Panc1 (cell line): ENCODE measurements at regions of chr4 and their contacts with region 1.

Region 1: DNA sequence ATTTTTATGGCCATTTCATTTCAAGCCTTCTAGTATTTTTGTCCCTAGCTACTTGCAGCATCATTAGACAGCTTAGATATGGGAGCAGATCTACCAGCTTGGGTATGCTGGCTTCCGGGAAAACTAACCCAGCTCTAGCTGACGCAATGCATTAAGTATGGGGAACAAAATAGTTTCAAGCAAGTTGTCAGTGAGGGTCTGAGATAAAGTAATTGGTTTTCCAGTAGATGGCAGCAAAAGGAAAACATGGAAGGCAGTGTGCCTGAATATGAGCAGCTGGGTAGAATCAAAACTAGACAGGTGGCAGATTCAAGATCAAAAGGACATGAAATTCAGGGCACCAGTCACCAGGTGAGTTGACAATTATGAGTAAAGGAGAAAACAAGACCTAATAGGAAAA is 340.9 kb upstream of the CTSO start:
- DNase-seq: no peak
- ATAC-seq: 0 out of 2 replicates have a peak, but pooled peaks have one; percentile 34
- H3K4me3 ChIP-seq: no peak overlapping the region
- H3K27ac ChIP-seq: no peak overlapping the region
- H3K4me1 ChIP-seq: no peaks in the 10 kb centered on the region
- H3K27me3 ChIP-seq: no peaks in the 10 kb centered on the region
- CTCF ChIP-seq: peak; percentile 36

Region 2: DNA sequence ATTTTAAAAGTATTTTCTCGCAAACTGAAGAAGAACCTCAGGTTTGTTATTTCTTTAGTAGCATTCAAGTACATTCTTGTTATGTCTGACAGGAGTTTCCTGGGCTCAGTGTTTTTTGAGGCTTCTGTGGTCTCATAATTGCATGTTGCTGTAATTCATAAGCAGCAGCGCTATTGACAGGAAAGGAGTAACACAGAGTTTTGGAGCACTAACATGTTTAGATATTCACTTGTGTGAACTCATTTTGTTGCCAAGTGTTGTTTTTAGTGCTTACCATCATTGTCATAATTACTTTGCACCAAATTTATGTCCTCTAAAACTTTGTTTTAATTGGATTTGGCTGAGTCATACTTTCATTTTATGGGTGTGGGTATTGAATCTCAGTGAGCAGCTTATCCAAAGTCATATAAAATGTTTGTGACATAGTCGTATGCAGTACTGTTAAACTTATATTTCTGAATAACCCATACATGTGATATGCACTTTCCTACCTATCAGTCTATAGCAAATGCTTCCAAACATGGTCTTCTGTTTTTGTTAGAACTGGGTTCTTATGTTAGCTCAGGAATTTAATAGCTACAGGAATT is 17.8 kb after region 1 on chr4:
- CTCF ChIA-PET with region 1: no interaction called
- POLR2A ChIA-PET with region 1: no interaction called
- in situ Hi-C with region 1: no loop called
- intact Hi-C with region 1: no loop called
- DNase-seq: no peak
- ATAC-seq: no peak
- H3K4me3 ChIP-seq: no peak overlapping the region
- H3K27ac ChIP-seq: no peak overlapping the region
- H3K4me1 ChIP-seq: no peaks in the 10 kb centered on the region
- H3K27me3 ChIP-seq: no peaks in the 10 kb centered on the region
- CTCF ChIP-seq: no peak

Region 3: DNA sequence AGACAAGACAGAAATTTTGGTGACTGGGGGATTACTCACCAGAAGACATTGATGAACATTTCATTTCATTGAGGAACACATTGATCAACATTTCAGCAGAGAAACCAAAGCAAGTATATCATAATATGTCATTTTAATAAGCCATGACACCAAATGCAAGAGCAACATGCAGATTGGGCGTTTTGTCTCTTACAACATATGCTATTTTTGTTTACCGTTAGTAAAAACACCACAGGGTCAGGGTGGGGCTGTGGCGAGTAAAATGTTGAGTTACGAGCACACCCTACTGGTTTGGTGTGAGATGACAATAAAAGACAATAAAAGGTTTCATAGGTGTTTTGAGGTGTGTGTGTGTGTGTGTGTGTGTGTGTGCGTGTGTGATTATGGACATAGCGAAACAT is 382.6 kb after region 1 on chr4:
- CTCF ChIA-PET with region 1: no interaction called
- POLR2A ChIA-PET with region 1: no interaction called
- in situ Hi-C with region 1: no loop called
- intact Hi-C with region 1: loop called (anchors 10 kb)
- DNase-seq: peak; percentile 28
- ATAC-seq: peak; percentile 70; the same call in 1 of the 2 replicates
- H3K4me3 ChIP-seq: no peak overlapping the region
- H3K27ac ChIP-seq: no peak overlapping the region
- H3K4me1 ChIP-seq: no peaks in the 10 kb centered on the region
- H3K27me3 ChIP-seq: no peaks in the 10 kb centered on the region
- CTCF ChIP-seq: peak; percentile 58